ENCODE measurements at regions of chr3 and their contacts with region 1.

Region 1: DNA sequence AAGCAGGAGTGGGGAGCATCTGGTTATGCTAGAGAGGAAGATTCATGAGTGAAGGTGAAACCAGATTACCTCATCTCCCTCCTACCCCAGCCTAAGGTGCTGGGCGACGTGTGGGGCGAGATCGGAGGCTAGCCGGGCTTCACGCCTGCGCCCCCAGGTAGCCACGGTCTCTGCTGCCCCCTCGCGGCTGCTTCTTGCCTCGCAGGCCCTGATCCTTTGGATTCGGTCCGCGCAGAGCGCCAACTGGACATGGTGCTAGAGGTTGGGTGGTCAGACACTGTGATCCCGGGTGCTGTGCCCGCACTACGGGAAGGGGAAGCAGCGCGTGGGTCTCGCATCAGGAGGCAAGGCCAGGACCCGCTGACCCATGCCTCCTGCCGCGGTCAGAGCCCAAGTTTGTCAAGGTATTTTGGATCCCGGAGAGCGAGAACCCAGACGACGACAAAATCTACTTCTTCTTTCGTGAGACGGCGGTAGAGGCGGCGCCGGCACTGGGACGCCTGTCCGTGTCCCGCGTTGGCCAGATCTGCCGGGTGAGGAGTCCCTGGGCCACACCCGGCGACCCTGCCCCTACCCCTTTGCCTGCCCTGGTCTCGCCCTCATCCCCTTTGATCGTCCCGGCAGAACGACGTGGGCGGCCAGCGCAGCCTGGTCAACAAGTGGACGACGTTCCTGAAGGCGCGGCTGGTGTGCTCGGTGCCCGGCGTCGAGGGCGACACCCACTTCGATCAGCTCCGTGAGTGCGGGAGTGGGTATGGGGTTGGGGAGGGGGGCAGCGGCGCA is 4.2 kb downstream of the SEMA3B start:
- DNase-seq: peak; percentile 89 to 91
- ATAC-seq: peak; percentile 90 to 94 (median 93)
- H3K4me3 ChIP-seq: no peak overlapping the region
- H3K4me3 Mint-ChIP-seq: peak overlapping the region; percentile 70
- H3K27ac ChIP-seq: no peak overlapping the region
- H3K27ac Mint-ChIP-seq: peak overlapping the region; percentile 67 to 82
- H3K4me1 ChIP-seq: peaks cover 33% of the 10 kb centered on the region
- H3K4me1 Mint-ChIP-seq: peaks cover 11 to 32% of the 10 kb centered on the region in 2 donors
- H3K27me3 ChIP-seq: peaks cover 38% of the 10 kb centered on the region
- H3K27me3 Mint-ChIP-seq: peaks cover 13 to 35% of the 10 kb centered on the region in 2 donors
- CTCF ChIP-seq: peak; percentile 96

Region 2: GRCh38 chr3:50121416-50122032 is 151.6 kb before region 1 on chr3:
- intact Hi-C with region 1: loop called (anchors 5 kb)
- DNase-seq: peak; percentile 68 to 88
- ATAC-seq: peak; percentile 79 to 90 (median 81)
- H3K4me3 ChIP-seq: no peak overlapping the region
- H3K4me3 Mint-ChIP-seq: no peak overlapping the region
- H3K27ac ChIP-seq: no peak overlapping the region
- H3K27ac Mint-ChIP-seq: peak overlapping the region in 1 of 2 donors; percentile 74
- H3K4me1 ChIP-seq: no peaks in the 10 kb centered on the region
- H3K4me1 Mint-ChIP-seq: peaks cover 8% of the 10 kb centered on the region in 2 donors
- H3K27me3 ChIP-seq: no peaks in the 10 kb centered on the region
- H3K27me3 Mint-ChIP-seq: no peaks in the 10 kb centered on the region
- CTCF ChIP-seq: peak; percentile 79

Region 3: DNA sequence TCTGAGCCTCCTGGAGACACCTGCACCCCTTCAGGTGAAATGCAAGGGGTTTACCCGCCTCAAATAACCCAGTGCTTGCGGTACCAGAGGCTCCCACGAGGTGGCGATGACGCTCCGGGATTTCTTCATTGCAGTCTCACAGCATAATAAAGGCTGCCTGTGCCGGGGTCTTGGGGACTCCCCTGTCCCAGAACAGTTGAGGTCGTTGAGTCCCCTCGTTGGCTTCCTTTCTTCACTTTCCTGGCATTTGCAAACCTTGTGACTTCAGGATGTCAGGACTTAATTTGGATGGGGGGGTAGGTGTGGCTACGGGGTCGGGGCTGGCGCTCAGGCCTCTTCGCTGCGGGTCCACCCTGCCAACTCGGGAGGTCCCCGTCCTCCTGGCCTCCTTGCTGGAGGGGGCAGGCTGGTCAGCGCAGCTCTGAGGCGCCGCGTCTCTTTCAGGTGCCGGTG is 80.4 kb before region 1 on chr3:
- intact Hi-C with region 1: loop called (anchors 1 kb)
- DNase-seq: peak; percentile 81 to 91
- ATAC-seq: peak; percentile 54 to 69 (median 58)
- H3K4me3 ChIP-seq: no peak overlapping the region
- H3K4me3 Mint-ChIP-seq: no peak overlapping the region
- H3K27ac ChIP-seq: no peak overlapping the region
- H3K27ac Mint-ChIP-seq: no peak overlapping the region
- H3K4me1 ChIP-seq: peaks cover 21% of the 10 kb centered on the region
- H3K4me1 Mint-ChIP-seq: peaks cover 0 to 6% of the 10 kb centered on the region in 2 donors
- H3K27me3 ChIP-seq: peaks cover 12% of the 10 kb centered on the region
- H3K27me3 Mint-ChIP-seq: peaks cover 7 to 12% of the 10 kb centered on the region in 2 donors
- CTCF ChIP-seq: peak; percentile 83

Measured in natural killer cell (primary cell).